OCI-LY7 (cell line): ENCODE measurements at regions of chr6 and their contacts with region 1.

Region 1: DNA sequence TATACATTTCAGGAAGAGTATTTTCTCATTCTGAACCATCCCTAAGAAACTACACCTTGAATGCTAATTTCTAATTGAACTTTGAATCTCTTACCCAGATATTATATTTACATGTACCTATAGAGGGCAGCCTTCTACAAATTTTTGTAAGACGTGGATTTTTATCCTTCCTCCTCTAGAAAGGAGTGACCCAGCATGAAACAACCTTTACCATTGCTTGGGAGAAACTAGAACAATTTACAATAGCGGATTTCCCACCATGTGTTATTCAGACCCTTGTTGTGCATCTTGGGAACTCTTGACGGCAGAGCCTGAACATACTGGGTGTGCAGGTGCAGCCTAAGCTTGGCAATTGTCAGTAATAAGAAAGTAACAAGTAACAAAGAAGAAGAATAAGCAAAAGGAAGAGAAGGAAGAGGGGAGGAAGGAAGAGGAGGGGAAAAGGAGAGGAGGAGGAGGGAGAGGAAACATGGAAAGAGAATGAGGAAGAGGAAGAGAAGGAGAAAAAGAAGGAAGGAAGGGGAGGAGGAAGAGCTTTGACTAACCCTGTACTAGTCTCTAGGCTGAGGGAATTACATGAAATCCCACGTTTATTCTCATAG is 10.8 kb upstream of the TAAR1 start:
- DNase-seq: peak; percentile 80
- H3K4me3 ChIP-seq: peak overlapping the region; percentile 27
- H3K27ac ChIP-seq: no peak overlapping the region
- H3K4me1 ChIP-seq: peaks cover 9% of the 10 kb centered on the region
- CTCF ChIP-seq: peak; percentile 93

Region 2: GRCh38 chr6:132279592-132280139 is 390.1 kb before region 1 on chr6:
- CTCF ChIA-PET with region 1: interaction called, 3 read pairs
- POLR2A ChIA-PET with region 1: no interaction called
- intact Hi-C with region 1: loop called (anchors 5 kb)
- DNase-seq: peak; percentile 88
- H3K4me3 ChIP-seq: peak overlapping the region; percentile 63
- H3K27ac ChIP-seq: peak overlapping the region; percentile 22
- H3K4me1 ChIP-seq: peaks cover 20% of the 10 kb centered on the region
- CTCF ChIP-seq: peak; percentile 100

Region 3: DNA sequence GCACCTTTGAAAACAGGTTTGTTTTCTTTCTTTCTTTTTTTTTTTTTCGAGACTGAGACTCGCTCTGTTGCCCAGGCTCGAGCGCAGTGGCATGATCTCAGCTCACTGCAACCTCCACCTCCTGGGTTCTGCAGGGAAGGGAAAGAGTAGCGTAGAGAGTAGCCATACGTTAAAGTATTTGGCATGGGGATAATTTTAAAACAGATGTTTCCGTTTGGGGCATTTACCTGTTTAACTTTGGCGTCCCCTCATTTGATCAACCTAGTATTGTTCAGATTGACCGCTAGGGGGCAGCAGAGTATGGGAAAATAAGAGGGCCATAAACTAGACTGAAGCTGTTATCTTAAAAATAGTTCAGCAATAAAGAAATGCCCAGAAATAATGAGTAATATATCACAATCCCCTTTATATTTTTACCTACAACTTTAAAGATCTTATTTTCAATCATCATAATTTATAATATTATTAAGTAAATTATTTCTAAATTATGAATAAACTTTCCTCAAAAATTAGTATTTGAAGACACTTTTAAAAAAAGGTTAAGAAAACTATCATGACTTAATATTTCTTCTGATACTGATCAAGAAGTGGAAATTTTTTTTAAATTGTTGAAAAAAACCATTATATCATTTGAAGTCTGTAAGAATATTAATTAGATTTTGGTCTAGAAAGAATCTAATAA is 139.4 kb before region 1 on chr6:
- CTCF ChIA-PET with region 1: no interaction called
- POLR2A ChIA-PET with region 1: no interaction called
- intact Hi-C with region 1: loop called (anchors 2 kb)
- DNase-seq: peak; percentile 82
- H3K4me3 ChIP-seq: peak overlapping the region; percentile 63
- H3K27ac ChIP-seq: no peak overlapping the region
- H3K4me1 ChIP-seq: peaks cover 7% of the 10 kb centered on the region
- CTCF ChIP-seq: peak; percentile 87

Region 4: DNA sequence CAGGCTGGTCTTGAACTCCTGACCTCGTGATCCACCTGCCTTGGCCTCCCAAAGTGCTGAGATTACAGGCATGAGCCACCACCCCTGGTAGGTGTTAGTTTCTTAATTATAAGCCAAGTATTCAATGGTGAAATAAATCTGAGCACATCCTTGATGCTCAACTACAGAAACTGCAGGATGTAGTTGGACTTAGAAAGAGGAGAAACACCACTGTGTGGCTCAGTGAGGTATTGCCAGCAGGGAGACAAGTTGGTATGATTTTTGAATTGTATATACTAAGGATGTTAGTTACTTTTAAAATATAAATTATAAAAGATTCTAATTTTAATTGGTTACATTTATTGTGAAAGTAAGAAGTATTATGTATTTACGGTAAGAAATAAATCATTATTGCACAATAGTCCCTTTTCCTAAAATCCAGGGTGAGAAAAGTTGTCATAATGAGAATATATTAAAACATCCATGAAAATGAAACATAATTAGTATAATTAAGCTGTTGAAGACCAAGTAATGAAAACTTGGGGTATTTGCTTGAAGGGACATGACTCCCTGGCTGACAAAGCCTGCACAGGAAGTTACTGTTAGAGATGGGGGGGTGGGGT is 111.1 kb after region 1 on chr6:
- CTCF ChIA-PET with region 1: no interaction called
- POLR2A ChIA-PET with region 1: interaction called, 6 read pairs
- intact Hi-C with region 1: loop called (anchors 5 kb)
- DNase-seq: peak; percentile 54
- H3K4me3 ChIP-seq: no peak overlapping the region
- H3K27ac ChIP-seq: no peak overlapping the region
- H3K4me1 ChIP-seq: no peaks in the 10 kb centered on the region
- CTCF ChIP-seq: peak; percentile 70

Region 5: GRCh38 chr6:132830334-132830751 is 160.6 kb after region 1 on chr6:
- CTCF ChIA-PET with region 1: no interaction called
- POLR2A ChIA-PET with region 1: interaction called, 5 read pairs
- intact Hi-C with region 1: loop called (anchors 2 kb)
- DNase-seq: peak; percentile 25
- H3K4me3 ChIP-seq: no peak overlapping the region
- H3K27ac ChIP-seq: no peak overlapping the region
- H3K4me1 ChIP-seq: no peaks in the 10 kb centered on the region
- CTCF ChIP-seq: peak; percentile 75

Region 6: GRCh38 chr6:132893788-132894428 is 224.1 kb after region 1 on chr6:
- CTCF ChIA-PET with region 1: no interaction called
- POLR2A ChIA-PET with region 1: no interaction called
- intact Hi-C with region 1: no loop called
- DNase-seq: no peak
- H3K4me3 ChIP-seq: no peak overlapping the region
- H3K27ac ChIP-seq: no peak overlapping the region
- H3K4me1 ChIP-seq: no peaks in the 10 kb centered on the region
- CTCF ChIP-seq: no peak

Region 7: GRCh38 chr6:132937466-132937906 is 267.7 kb after region 1 on chr6:
- CTCF ChIA-PET with region 1: no interaction called
- POLR2A ChIA-PET with region 1: no interaction called
- intact Hi-C with region 1: loop called (anchors 10 kb)
- DNase-seq: peak; percentile 41
- H3K4me3 ChIP-seq: no peak overlapping the region
- H3K27ac ChIP-seq: no peak overlapping the region
- H3K4me1 ChIP-seq: no peaks in the 10 kb centered on the region
- CTCF ChIP-seq: peak; percentile 78